Natural killer cell (primary cell): ENCODE measurements at regions of chrX and their contacts with region 1.

Region 1: DNA sequence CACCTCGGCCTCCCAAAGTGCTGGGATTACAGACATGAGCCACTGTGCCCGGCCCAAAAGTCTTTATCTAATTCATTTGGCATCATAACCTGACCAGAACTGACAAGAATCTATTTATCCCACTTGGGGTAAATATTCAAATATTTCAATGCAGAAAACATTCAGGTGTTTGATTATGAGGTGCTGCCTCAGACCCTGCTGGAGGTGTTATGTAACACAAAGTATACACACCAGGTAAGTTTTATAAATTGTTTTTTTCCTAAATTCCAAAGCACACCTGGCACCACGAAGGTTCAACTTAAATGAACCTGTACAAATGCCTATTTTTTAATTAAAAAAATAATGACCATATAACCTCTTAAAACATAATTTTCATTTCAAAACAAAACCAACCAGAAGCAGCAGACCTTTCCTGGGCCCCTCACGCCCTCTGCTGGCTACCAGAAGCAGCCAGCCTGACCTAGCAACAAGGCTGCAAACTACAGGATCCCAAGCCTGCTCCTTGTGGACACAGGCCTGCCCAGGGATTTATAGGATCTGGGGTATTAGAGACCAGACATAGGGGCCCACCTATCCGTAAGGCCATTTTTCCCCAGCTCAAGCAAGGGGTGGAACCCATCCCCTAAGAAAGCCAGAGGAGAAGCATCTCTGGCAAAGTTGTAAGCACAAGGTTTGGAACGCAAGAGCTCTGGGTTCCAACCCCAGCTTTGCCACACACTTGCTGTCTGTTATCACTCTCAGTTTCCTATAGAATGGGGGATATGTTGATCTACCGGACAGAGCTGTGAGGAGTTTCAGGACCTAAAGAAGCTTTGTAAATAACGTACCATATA is 11.7 kb downstream of the OTUD5 start:
- DNase-seq: peak; percentile 36 to 75
- ATAC-seq: peak; percentile 59 to 72 (median 70)
- H3K4me3 ChIP-seq: no peak overlapping the region
- H3K4me3 Mint-ChIP-seq: no peak overlapping the region
- H3K27ac ChIP-seq: no peak overlapping the region
- H3K27ac Mint-ChIP-seq: peak overlapping the region; percentile 40 to 72
- H3K4me1 ChIP-seq: peaks cover 38% of the 10 kb centered on the region
- H3K4me1 Mint-ChIP-seq: peaks cover 29 to 42% of the 10 kb centered on the region in 2 donors
- H3K27me3 ChIP-seq: no peaks in the 10 kb centered on the region
- H3K27me3 Mint-ChIP-seq: peaks cover 0 to 6% of the 10 kb centered on the region in 2 donors
- CTCF ChIP-seq: peak; percentile 71

Region 2: DNA sequence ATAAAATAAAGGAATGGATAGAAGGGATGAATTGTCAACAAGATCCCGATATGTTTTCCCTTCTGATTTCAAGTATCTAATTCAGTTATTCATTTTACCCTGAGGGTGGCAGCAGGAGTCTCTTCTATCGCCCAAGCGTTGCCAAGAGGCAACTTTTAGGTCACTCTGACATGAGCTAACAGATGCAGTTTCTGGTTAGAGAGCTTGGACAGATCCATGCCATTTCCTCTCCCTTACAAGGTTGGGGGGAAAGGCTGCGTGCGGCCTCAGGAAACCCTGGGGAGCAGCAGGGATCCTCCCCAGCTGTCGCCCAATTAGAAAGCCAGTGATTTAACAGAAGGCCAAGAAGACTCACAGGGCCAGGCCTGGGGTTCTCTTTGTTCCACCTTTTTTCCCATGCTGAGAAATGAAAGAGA is 297.4 kb before region 1 on chrX:
- intact Hi-C with region 1: loop called (anchors 2 kb)
- DNase-seq: peak; percentile 17 to 72
- ATAC-seq: peak; percentile 53 to 83 (median 80)
- H3K4me3 ChIP-seq: no peak overlapping the region
- H3K4me3 Mint-ChIP-seq: no peak overlapping the region
- H3K27ac ChIP-seq: no peak overlapping the region
- H3K27ac Mint-ChIP-seq: no peak overlapping the region
- H3K4me1 ChIP-seq: no peaks in the 10 kb centered on the region
- H3K4me1 Mint-ChIP-seq: peaks cover 0 to 4% of the 10 kb centered on the region in 2 donors
- H3K27me3 ChIP-seq: no peaks in the 10 kb centered on the region
- H3K27me3 Mint-ChIP-seq: no peaks in the 10 kb centered on the region
- CTCF ChIP-seq: peak; percentile 57

Region 3: DNA sequence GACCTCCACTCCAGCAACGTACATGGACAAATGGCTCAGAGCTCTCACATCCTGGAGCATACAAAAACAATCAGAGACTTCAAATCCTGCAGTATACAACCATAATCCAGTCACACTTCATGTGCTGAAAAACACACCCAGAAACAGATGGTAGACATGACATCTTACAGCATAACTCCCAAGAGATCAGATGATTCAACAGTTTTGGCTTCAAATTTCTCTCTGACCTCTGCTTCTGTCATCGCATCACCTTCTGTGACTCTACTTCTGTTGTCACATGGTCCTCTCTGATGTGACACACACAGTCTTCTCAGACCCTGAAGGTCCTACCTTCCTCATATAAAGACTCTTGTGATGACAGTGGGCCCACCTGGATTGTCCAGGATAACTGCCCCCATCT is 230.7 kb before region 1 on chrX:
- intact Hi-C with region 1: no loop called
- DNase-seq: peak in 1 of 2 donors; percentile 34
- ATAC-seq: peak in 1 of 3 donors; percentile 7
- H3K4me3 ChIP-seq: no peak overlapping the region
- H3K4me3 Mint-ChIP-seq: no peak overlapping the region
- H3K27ac ChIP-seq: peak overlapping the region; percentile 94
- H3K27ac Mint-ChIP-seq: peak overlapping the region; percentile 76 to 97
- H3K4me1 ChIP-seq: peaks cover 57% of the 10 kb centered on the region
- H3K4me1 Mint-ChIP-seq: peaks cover 64 to 84% of the 10 kb centered on the region in 2 donors
- H3K27me3 ChIP-seq: no peaks in the 10 kb centered on the region
- H3K27me3 Mint-ChIP-seq: peaks cover 0 to 11% of the 10 kb centered on the region in 2 donors
- CTCF ChIP-seq: no peak